K562 (cell line): ENCODE measurements at regions of chr1 and their contacts with region 1.

Region 1: DNA sequence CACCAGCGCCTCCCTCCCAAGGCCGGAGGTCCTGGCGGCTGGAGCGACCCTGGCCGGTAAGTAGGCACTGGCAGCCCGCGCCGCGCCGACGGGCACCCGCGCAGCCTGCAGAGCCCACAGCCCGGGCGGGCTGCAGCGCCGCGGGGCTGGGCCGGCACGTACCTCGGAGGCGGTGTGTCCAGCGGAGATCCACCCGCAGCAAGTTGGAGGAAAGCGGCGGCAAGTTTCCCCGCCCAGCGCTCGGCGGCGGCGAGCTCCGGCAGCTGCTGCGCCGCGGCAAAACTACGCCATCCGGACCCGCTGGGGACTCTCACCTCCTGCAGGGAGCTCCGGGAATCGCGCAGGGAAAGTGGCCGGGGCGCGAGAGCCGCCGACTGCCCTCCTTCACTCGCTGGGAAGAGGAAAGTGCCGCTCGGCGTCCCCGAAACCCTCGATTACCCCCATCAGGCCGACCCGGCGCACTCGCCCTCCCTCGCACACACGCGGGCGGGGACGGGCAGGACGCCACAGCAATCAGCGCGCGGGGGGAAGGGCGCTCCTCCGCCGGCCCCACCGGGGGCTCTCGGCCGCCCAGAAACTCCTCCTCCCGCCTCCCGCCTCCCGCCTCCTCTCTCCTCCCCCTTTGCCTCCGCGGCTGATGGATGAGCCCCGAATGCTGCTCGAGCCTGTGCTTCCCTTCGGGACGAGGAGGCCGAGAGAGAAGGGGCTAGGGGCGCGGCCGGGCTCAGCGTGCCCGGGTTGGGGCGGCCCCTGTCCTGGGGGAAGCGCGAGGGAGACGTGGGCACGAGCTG is at the start of gene TGFBR3:
- DNase-seq: peak; percentile 88 to 92 (median 89)
- ATAC-seq: peak; percentile 92
- H3K4me3 ChIP-seq: peak within 1 kb of the TSS; percentile 92
- H3K27ac ChIP-seq: peak within 1 kb of the TSS; percentile 50
- H3K4me1 ChIP-seq: peaks cover 14 to 21% of the 10 kb centered on the region in 2 experiments; a peak in 4 of 5 replicates
- H3K27me3 ChIP-seq: no peaks in the 10 kb centered on the region
- CTCF ChIP-seq: peak; percentile 39 to 64 (median 46); a peak in 5 of 6 replicates
- EP300 ChIP-seq: no peak
- POLR2A ChIP-seq: peak; percentile 79
- RAD21 ChIP-seq: peak; percentile 42 to 60
- polyA plus RNA-seq, gene TGFBR3: 3.6 to 4.3 TPM

Region 2: DNA sequence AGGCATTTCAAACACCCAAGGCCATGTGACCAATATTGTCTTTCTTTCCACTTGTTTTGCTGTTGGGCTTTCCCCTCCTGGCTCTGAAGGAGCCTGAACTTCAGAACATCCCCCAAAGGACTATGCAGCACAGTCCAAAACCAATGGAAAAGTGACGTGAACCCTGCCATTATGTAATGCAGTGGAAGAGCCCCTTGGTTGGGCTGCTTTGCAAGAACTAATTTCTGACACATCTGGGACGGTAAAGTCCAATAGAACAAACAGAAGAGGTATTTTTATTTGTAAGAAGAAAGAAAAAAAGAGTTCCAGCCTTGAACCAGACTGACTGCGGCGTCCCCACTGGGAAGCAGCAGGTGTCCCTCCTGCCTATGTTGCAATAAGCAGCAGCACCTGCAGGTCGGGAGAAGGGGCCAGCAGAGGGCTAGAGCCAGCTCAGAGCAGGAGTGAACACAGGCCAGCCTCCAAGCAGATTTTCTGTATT is 268.6 kb before region 1 on chr1:
- CTCF ChIA-PET with region 1: no interaction called
- POLR2A ChIA-PET with region 1: no interaction called
- in situ Hi-C with region 1: no loop called
- intact Hi-C with region 1: loop called (anchors 5 kb)
- DNase-seq: peak in 3 of 4 experiments; percentile 38 to 63 (median 46)
- ATAC-seq: peak; percentile 97
- H3K4me3 ChIP-seq: no peak overlapping the region
- H3K27ac ChIP-seq: no peak overlapping the region
- H3K4me1 ChIP-seq: no peaks in the 10 kb centered on the region
- H3K27me3 ChIP-seq: no peaks in the 10 kb centered on the region
- CTCF ChIP-seq: peak; percentile 58 to 98 (median 86)
- EP300 ChIP-seq: no peak
- POLR2A ChIP-seq: no peak
- RAD21 ChIP-seq: peak; percentile 42 to 87

Region 3: DNA sequence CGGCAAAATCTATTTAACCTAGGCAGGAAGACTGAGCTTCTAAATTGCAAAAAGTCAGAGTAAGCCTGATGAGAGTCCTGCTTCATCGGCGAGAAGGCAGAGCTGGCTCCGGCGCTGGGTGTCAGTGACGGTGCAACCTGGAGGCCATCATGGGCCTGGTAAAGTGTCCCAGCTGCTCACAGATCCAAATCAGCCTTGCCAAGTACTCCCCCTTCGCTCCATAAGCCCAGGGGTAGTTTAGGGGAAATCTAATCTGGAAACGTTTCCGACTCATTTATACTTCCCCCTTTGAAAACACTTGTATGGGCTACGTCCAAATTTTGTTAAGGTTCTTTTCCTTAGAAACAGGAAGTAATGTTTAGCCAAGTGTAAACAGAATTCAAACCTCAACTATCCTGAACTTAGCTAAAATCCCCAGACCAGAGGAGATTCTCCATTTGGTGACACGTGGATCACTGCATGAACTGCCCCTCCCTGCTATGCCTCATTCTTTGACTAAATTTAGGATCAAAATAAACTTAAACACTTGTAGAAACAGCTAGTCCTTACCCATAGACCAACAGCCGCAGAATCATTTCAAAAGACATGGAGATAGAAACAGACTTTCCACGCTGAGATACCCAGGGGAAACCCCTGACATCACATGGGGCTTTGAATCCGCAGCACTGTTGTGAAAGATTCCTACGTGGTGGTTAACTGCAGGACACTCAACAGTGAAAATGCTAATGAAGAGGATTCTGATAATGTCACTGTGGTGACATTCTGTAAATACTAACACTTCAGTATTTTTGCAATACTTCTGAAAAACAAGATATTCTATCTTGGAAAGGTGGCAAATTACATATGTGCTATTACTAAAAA is 172.7 kb before region 1 on chr1:
- CTCF ChIA-PET with region 1: no interaction called
- POLR2A ChIA-PET with region 1: no interaction called
- in situ Hi-C with region 1: no loop called
- intact Hi-C with region 1: loop called (anchors 10 kb)
- DNase-seq: peak in 1 of 4 experiments; percentile 63
- ATAC-seq: peak; percentile 67
- H3K4me3 ChIP-seq: no peak overlapping the region
- H3K27ac ChIP-seq: peak overlapping the region; percentile 81
- H3K4me1 ChIP-seq: peaks cover 7 to 68% of the 10 kb centered on the region in 2 experiments; a peak in 4 of 5 replicates
- H3K27me3 ChIP-seq: no peaks in the 10 kb centered on the region; a peak in 1 of 5 replicates
- CTCF ChIP-seq: no peak
- EP300 ChIP-seq: peak; percentile 30; the same call in 1 of the 2 replicates
- POLR2A ChIP-seq: 0 out of 2 replicates have a peak, but pooled peaks have one; percentile 26
- RAD21 ChIP-seq: no peak; a peak in 1 of 4 replicates

Region 4: DNA sequence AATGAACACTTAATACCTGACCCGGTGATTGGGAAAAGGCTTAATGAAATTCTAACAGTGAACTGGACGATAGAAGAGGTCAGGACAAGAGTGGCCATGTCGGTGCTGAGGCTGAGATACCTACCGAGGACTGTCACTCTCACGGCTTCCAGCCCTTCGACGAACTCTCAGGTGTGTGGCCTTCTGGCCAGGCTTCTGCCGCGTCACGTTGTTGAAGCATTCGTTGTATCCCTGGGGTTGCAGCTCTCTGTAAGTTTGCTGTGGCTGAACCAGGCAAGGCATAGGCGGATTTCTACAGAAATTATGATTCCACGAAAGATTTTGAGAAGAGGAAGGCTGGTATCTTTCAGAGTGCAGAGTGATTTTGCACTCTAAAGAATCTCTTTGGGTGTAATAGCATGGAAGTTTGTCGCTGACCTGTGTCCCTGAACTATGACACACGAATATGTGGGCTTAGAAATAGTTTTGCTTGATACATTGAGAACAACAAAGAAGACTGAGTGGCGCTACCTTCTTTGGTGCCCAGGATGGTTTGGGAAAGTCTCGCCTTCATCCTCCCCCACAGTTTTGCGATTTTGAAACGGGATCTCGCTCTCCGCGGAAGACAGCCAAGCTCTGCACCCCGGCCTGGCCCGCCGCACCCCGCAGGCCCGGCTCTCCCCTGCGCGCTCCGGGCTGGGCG is 143.5 kb after region 1 on chr1:
- CTCF ChIA-PET with region 1: no interaction called
- POLR2A ChIA-PET with region 1: no interaction called
- in situ Hi-C with region 1: no loop called
- intact Hi-C with region 1: no loop called
- DNase-seq: no peak
- ATAC-seq: no peak
- H3K4me3 ChIP-seq: no peak overlapping the region
- H3K27ac ChIP-seq: no peak overlapping the region
- H3K4me1 ChIP-seq: peaks cover 0 to 7% of the 10 kb centered on the region in 2 experiments; a peak in 2 of 5 replicates
- H3K27me3 ChIP-seq: peaks cover 12 to 31% of the 10 kb centered on the region in 2 experiments
- CTCF ChIP-seq: no peak
- EP300 ChIP-seq: no peak
- POLR2A ChIP-seq: no peak
- RAD21 ChIP-seq: no peak